Calu3 (cell line): ENCODE measurements at regions of chr12 and their contacts with region 1.

Region 1: DNA sequence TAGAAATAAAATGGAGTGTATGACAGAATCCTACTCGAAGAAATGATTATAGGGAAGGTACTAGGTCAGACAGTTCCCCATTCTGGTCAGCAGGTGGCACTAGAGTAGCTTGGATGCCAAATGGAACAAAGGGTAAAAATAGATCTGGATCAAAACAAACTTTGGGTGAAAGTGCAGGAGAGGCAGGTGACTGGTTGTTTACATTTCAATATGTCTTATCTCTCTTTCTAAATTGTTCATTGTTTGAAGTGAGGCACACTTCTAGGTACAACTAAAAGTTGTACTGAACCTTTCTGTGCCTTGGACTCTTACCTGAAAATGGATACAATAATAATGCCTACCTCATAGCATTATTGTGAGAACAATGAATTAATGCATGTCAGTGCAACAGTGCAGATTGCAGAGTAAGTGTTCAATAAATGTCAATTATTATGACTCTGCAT is 62.0 kb upstream of the OSBPL8 start:
- DNase-seq: peak; percentile 76
- H3K4me3 Mint-ChIP-seq: no peak overlapping the region
- H3K27ac Mint-ChIP-seq: no peak overlapping the region
- H3K4me1 Mint-ChIP-seq: peaks cover 7% of the 10 kb centered on the region
- H3K27me3 Mint-ChIP-seq: no peaks in the 10 kb centered on the region
- CTCF ChIP-seq: peak; percentile 88

Region 2: DNA sequence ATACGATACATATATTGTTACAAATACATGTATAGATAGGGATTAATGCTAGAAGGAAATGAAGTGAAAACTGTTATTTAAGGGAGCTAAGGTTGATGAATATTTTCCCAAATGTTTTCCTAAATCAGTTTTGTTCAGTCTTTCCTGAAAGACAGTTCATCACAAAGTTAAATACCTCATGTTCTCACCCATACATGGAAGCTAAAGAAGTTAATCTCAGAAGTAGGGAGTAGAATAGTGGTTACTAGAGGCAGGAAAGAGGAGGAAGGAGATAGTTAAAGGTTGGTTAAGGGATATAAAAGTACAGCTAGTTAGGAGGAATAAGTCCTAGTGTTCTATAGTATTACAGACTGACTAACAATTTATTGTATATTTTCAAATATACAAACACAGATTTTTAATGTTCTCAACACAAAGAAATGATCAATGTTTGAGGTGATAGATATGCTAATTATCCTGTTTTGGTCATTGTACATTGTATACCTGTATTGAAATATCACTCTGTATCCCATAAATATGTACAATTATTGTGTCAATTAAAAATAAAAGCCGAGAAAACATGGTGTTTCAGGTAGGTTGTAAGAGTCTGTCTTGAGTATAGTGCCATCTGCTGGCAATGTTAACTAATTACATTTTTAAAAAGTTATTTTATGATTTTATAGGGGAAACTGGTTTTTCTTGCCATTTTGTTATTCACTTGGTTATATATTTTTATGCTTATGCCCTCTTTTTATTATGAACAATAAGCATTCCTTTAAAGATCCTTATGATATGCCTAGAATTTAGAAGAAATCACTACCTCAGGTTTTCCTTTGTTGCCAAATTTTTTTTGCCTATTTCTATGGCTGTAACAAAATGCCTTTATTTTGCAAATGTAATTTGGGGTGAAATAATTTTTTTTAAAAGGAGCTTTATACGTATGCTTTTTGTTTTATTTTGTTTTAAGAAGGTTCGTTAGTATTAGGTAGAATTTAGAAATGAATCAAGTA is 169.3 kb after region 1 on chr12:
- CTCF ChIA-PET with region 1: interaction called, 9 read pairs
- intact Hi-C with region 1: loop called (anchors 1 kb)
- DNase-seq: no peak
- H3K4me3 Mint-ChIP-seq: no peak overlapping the region
- H3K27ac Mint-ChIP-seq: no peak overlapping the region
- H3K4me1 Mint-ChIP-seq: no peaks in the 10 kb centered on the region
- H3K27me3 Mint-ChIP-seq: no peaks in the 10 kb centered on the region
- CTCF ChIP-seq: peak; percentile 56

Region 3: DNA sequence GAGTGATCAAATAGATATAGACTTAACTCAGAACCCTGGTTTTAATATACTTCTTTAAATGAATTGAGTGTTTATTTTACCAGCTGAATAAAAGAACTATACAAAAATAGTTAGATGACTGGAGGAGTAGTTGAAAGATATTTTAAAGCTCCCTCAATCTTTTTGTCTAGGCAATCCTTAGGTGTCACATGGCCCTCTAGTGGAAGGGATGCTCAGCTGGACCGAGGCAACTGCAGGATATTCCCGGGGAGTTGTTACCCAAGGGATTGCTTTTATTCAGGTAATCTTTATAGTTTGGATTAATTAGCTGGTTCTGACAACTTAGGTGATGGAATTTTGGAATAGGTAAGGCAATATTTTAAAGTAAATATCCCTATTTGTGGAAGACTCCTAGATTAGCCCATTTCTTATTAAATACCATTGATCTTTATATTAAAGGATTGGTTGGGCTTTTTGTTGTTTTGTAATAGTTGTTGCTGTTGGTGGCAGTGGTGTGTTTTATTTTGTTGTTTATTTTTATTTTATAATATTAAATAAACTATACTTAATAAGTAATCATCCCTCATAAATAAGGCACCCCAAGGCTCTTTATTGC is 199.4 kb after region 1 on chr12:
- CTCF ChIA-PET with region 1: no interaction called
- intact Hi-C with region 1: loop called (anchors 1 kb)
- DNase-seq: peak; percentile 50
- H3K4me3 Mint-ChIP-seq: no peak overlapping the region
- H3K27ac Mint-ChIP-seq: no peak overlapping the region
- H3K4me1 Mint-ChIP-seq: no peaks in the 10 kb centered on the region
- H3K27me3 Mint-ChIP-seq: no peaks in the 10 kb centered on the region
- CTCF ChIP-seq: peak; percentile 50

Region 4: DNA sequence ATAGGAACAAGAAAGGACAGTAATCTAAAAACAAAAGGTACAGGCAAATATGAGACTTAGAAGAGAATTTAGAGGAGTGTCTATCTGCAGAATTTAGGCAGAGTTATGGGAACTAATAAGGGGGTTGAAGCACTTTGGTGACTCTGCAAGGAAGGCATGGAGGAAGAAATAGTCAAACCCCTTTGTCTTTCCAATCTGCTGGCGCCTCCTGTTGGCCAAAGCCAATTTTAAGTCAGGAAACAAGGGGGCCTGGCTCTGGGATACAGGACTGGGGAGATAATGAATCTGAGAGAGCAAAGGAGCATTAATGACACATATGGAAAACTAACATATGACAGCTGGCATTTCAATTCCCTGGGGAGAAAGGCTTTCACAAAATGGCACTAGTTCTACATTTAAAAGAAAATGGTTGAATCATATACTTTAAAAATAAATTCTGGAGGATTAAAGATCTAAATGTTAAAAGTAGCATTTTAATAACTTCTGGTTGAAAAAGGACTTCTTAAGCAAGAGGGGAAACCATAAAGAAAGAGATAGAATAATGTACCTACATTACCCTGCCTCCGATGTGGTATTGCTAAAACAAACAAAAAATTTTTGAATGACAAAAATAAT is 305.7 kb after region 1 on chr12:
- CTCF ChIA-PET with region 1: no interaction called
- intact Hi-C with region 1: loop called (anchors 2 kb)
- DNase-seq: peak; percentile 43
- H3K4me3 Mint-ChIP-seq: no peak overlapping the region
- H3K27ac Mint-ChIP-seq: no peak overlapping the region
- H3K4me1 Mint-ChIP-seq: no peaks in the 10 kb centered on the region
- H3K27me3 Mint-ChIP-seq: peaks cover 21% of the 10 kb centered on the region
- CTCF ChIP-seq: peak; percentile 38

Region 5: DNA sequence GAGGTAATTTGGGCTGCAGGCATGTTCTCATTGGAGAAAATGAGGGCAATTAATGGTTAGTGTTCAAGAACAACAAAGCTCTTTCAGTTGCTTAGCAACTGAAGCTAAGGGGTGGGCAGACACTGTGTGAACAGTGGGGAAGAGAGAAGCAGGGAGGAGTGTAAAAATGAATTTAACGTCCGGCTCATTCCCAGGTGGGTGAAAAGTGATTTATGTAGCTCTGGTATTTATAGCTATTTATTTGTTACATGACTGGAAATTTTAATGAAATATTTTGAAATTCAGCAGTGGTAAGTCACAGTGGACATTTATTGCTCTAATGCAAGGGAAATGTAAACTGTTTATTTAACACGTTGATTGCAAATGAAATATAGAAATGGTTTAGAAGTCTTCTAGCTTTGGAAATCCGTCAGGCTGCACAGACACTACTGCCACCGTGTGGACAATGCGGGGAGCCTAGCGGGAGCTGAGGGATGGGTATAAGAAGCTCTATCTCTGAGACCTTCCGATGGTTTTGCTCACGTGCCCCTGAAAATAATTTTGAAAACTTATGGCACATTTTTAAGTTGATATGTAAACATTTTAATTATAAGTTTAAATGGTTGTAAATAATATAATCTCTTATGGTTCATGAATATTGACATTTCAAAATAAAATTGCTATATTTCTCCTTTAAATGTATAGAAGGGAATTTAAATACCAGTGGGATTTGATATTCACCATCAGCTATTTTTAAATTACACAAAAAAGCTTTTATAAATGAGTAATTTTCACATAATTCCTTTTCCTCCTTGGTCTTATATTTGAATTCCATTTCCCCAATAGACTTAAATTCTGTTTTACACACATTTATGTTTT is 389.3 kb after region 1 on chr12:
- CTCF ChIA-PET with region 1: interaction called, 17 read pairs
- intact Hi-C with region 1: loop called (anchors 1 kb)
- DNase-seq: peak; percentile 85
- H3K4me3 Mint-ChIP-seq: no peak overlapping the region
- H3K27ac Mint-ChIP-seq: no peak overlapping the region
- H3K4me1 Mint-ChIP-seq: no peaks in the 10 kb centered on the region
- H3K27me3 Mint-ChIP-seq: no peaks in the 10 kb centered on the region
- CTCF ChIP-seq: peak; percentile 78